PC-9 (cell line): ENCODE measurements at regions of chr18 and their contacts with region 1.

Region 1: DNA sequence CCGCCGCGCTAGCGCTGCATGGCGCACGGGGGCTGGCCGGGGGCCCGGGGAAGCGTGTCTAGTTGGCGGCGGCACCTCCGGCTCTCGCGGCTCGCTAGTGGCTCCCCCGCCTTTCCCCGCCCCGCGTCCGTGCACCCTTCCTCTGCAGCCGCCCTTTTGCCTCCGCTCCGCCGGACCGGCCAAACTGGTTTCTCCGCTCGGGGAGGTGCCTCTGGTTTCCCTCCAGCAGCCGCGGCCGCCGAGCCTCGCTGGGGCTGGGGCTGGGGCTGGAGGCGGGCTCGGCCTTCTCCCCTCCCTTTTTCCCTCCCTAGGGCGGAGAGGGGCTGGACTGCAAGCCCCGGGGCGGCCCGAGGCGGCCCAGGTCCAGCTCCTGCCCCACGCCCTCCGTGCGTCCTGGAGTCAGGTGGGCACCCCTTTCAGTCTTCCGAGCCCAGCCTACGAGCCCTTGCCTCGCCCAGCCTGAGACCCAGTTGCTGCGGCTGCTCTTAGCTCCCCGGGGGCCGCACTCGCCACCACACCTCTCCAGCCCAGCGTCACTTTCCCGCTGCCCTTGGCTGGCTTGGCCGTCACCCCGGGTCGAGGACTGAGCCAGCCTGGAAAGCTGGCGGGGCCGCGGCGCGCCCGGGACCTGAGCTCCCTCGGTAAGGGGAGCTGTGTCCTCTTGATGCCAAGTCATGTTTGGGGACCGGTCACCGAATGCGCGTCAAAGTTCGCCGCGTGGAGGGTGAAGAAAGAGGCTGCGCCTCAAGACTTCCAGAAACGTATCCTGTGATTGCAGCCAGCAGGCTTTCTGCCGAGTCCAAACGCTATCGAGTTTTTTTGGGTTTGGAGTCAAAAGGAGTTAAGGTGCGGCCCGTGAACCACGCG is at the start of gene ATP8B1:
- DNase-seq: peak; percentile 89 to 95
- H3K4me3 ChIP-seq: peak within 1 kb of the TSS; percentile 100
- H3K27ac ChIP-seq: peak within 1 kb of the TSS; percentile 72
- H3K4me1 ChIP-seq: peaks cover 54% of the 10 kb centered on the region
- H3K27me3 ChIP-seq: no peaks in the 10 kb centered on the region
- CTCF ChIP-seq: no peak
- total RNA-seq, gene ATP8B1: 16.7 and 23.4 TPM in 2 replicates

Region 2: DNA sequence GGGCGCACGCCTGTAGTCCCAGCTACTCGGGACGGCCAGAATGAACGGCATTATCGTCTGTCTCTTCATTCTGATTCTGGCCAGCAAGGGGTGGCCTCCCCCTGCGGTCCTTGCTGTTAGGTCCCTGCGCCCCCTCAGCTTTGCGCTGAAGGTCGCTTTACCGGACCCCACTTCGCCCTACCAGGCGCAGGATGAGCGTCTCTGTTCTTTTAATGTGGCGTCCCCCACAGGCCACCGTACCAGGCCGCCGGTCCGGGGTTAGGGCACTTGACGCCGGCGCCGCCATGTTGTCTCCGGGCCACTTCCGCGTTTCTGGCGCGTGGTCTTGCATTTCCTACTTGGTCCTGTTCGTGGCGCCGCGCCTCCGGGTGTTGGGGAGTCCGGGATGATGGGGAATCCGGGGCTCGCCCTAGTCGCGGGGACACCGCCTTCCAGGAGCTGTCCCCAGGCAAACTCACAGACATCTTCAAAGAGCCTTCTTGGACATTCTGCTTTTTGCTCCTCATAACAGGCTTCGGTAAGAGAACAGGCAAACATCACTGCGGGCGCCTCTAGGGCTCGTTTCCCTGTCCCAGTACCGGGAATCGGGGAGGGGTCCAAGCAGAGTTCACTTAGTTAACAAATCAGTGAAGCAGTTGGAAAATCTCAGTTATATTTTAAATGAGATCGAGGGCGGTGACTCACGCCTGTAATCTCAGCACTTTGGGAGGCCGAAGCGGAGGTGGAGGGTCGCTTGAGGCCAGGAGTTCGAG is 173.2 kb before region 1 on chr18:
- CTCF ChIA-PET with region 1: no interaction called
- POLR2A ChIA-PET with region 1: no interaction called
- intact Hi-C with region 1: loop called (anchors 2 kb)
- DNase-seq: peak; percentile 82 to 88
- H3K4me3 ChIP-seq: peak overlapping the region; percentile 60
- H3K27ac ChIP-seq: peak overlapping the region; percentile 57
- H3K4me1 ChIP-seq: peaks cover 10% of the 10 kb centered on the region
- H3K27me3 ChIP-seq: no peaks in the 10 kb centered on the region
- CTCF ChIP-seq: peak; percentile 70; the same call in 1 of the 2 replicates

Region 3: GRCh38 chr18:57710226-57710625 is 93.1 kb before region 1 on chr18:
- CTCF ChIA-PET with region 1: no interaction called
- POLR2A ChIA-PET with region 1: no interaction called
- intact Hi-C with region 1: loop called (anchors 5 kb)
- DNase-seq: no peak
- H3K4me3 ChIP-seq: no peak overlapping the region
- H3K27ac ChIP-seq: no peak overlapping the region
- H3K4me1 ChIP-seq: peaks cover 86% of the 10 kb centered on the region
- H3K27me3 ChIP-seq: no peaks in the 10 kb centered on the region
- CTCF ChIP-seq: no peak

Region 4: DNA sequence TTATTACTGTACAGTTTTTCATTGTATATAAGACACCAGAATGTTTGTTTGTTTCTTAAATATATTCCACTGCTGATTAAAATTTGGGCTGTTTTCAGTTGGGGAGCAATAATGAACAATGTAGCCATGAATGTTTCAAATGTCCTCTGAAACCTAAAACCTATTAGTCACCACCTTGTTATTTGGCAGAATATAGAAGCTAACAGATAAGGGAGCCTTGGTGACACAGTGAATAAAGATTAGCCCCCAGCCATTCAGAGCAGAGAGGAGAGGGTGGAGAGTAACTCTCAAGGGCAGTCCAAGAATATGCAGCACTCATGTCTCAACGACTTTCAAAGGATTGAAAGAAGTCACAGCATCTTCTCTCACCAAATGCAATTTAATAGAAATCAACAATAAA is 42.9 kb after region 1 on chr18:
- CTCF ChIA-PET with region 1: no interaction called
- POLR2A ChIA-PET with region 1: no interaction called
- intact Hi-C with region 1: loop called (anchors 5 kb)
- DNase-seq: peak; percentile 56 to 94
- H3K4me3 ChIP-seq: no peak overlapping the region
- H3K27ac ChIP-seq: peak overlapping the region; percentile 67
- H3K4me1 ChIP-seq: peaks cover 32% of the 10 kb centered on the region
- H3K27me3 ChIP-seq: no peaks in the 10 kb centered on the region
- CTCF ChIP-seq: no peak